Ovary (tissue), 10 donors: ENCODE measurements at regions of chr3 and their contacts with region 1.

Region 1: GRCh38 chr3:168220556-168220955 is 124.8 kb upstream of the GOLIM4 start:
- DNase-seq: no peak
- H3K4me3 ChIP-seq: no peak overlapping the region
- H3K27ac ChIP-seq: no peak overlapping the region
- H3K4me1 ChIP-seq: no peaks in the 10 kb centered on the region
- H3K27me3 ChIP-seq: no peaks in the 10 kb centered on the region
- CTCF ChIP-seq: no peak
- EP300 ChIP-seq: no peak
- POLR2A ChIP-seq: no peak

Region 2: GRCh38 chr3:167151636-167152035 is 1068.9 kb before region 1 on chr3:
- intact Hi-C with region 1: loop called in 1 of 4 experiments (anchors 5 kb)
- DNase-seq: no peak
- H3K4me3 ChIP-seq: no peak overlapping the region
- H3K27ac ChIP-seq: no peak overlapping the region
- H3K4me1 ChIP-seq: no peaks in the 10 kb centered on the region
- H3K27me3 ChIP-seq: no peaks in the 10 kb centered on the region
- CTCF ChIP-seq: no peak
- EP300 ChIP-seq: no peak
- POLR2A ChIP-seq: no peak